GM12878 (cell line): ENCODE measurements at regions of chr1 and their contacts with region 1.

Region 1: GRCh38 chr1:74641876-74642275 is 31.7 kb downstream of the ERICH3 start:
- DNase-seq: no peak
- ATAC-seq: no peak
- H3K4me3 ChIP-seq: no peak overlapping the region
- H3K27ac ChIP-seq: no peak overlapping the region
- H3K4me1 ChIP-seq: no peaks in the 10 kb centered on the region
- H3K27me3 ChIP-seq: no peaks in the 10 kb centered on the region; a peak in 1 of 4 replicates
- CTCF ChIP-seq: no peak
- EP300 ChIP-seq: no peak
- POLR2A ChIP-seq: no peak
- RAD21 ChIP-seq: no peak

Region 2: GRCh38 chr1:74609810-74610371 is 32.0 kb before region 1 on chr1:
- CTCF ChIA-PET with region 1: no interaction called
- POLR2A ChIA-PET with region 1: no interaction called
- RAD21 ChIA-PET with region 1: no interaction called
- SMC1A ChIA-PET with region 1: no interaction called
- in situ Hi-C with region 1: no loop called
- intact Hi-C with region 1: loop called (anchors 2 kb)
- DNase-seq: no peak
- ATAC-seq: no peak
- H3K4me3 ChIP-seq: no peak overlapping the region
- H3K27ac ChIP-seq: no peak overlapping the region
- H3K4me1 ChIP-seq: no peaks in the 10 kb centered on the region
- H3K27me3 ChIP-seq: no peaks in the 10 kb centered on the region
- CTCF ChIP-seq: no peak
- EP300 ChIP-seq: no peak
- POLR2A ChIP-seq: no peak
- RAD21 ChIP-seq: no peak

Region 3: DNA sequence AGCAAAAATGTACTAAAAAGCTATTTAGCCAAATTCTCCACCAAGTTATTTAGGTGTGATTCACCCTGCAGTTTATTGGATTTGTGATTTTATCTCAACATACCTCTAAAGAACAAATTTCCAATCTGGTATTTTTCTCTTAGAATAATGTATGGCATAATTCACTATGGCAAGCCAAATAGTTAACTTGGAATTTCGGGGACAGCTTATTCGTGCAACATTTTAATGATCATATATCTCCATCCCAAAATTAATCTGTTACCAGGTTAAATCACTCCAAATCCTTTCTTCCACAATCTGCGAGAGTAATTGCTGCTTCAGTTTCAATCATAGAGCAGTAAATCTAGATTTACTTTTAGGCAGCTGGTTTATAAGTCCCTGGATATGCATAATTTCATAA is 21.6 kb before region 1 on chr1:
- CTCF ChIA-PET with region 1: no interaction called
- POLR2A ChIA-PET with region 1: no interaction called
- RAD21 ChIA-PET with region 1: no interaction called
- SMC1A ChIA-PET with region 1: no interaction called
- in situ Hi-C with region 1: no loop called
- intact Hi-C with region 1: no loop called
- DNase-seq: no peak
- ATAC-seq: no peak
- H3K4me3 ChIP-seq: no peak overlapping the region
- H3K27ac ChIP-seq: no peak overlapping the region
- H3K4me1 ChIP-seq: no peaks in the 10 kb centered on the region
- H3K27me3 ChIP-seq: no peaks in the 10 kb centered on the region
- CTCF ChIP-seq: no peak
- EP300 ChIP-seq: no peak
- POLR2A ChIP-seq: no peak
- RAD21 ChIP-seq: no peak